G401 (cell line): ENCODE measurements at regions of chr2 and their contacts with region 1.

Region 1: DNA sequence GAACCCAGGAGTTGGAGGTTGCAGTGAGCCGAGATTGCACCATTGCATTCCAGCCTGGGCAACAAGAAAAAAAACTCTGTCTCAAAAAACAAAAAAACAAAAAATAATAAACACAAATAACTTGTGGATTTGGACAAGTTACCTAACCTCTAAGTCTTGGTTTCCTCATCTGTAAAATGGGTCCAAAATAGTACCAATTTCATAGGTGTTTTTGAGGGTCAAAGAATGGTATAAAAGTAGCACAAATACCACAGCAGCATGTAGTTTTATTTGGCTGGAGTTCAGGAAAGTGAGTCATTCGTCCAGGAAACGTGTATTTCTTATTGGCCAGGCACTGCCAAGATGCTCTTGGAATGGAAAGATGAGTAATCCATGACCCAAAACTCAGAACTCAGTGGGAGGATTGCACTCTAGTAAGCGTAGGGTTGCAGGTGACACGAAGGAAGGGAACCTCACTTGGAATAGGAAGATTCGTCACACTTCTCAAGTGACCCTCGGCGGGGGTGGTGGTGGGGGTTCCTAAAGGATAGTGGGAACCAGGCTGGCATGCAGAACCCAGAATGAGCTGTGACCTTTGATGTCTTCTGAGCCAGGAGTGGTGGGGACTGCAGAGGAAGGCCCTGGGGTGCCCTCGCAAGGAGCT is 24.4 kb downstream of the GRHL1 start:
- DNase-seq: no peak

Region 2: DNA sequence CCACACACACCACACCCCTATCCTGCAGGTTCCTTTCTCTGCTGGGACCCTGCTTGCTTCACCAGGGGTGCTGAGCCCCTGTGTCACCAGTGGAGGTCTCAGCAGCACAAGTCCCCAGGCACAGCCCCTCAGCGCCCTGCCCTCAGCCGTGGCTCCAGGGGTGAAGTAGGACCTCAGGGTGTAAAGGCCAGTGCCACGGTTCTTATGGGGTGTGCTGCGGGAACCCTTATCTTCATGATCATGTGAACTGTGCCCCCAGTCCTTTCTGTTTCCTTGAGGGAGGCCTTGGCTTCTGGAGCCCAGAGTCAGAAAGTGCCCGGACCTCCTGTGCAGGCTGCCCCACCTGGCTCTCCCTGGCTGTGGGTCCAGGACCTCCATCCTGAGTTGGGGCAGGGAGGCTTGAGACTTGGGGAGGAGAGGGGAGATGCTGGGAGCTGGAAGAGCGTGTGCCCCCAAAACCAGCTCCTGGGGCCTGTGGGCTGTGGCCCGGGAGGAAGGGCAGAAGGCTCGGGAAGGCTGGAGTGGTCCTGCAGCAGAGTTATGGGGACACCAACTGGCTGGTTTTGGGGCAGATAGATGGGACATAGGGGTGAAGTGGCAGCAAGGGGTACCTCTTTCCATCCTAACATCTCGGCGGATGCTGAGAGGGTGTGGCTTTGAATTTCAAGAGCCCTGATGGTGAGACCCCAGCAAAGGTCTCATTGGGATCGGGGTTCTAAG is 47.2 kb after region 1 on chr2:
- in situ Hi-C with region 1: no loop called
- DNase-seq: no peak

Region 3: DNA sequence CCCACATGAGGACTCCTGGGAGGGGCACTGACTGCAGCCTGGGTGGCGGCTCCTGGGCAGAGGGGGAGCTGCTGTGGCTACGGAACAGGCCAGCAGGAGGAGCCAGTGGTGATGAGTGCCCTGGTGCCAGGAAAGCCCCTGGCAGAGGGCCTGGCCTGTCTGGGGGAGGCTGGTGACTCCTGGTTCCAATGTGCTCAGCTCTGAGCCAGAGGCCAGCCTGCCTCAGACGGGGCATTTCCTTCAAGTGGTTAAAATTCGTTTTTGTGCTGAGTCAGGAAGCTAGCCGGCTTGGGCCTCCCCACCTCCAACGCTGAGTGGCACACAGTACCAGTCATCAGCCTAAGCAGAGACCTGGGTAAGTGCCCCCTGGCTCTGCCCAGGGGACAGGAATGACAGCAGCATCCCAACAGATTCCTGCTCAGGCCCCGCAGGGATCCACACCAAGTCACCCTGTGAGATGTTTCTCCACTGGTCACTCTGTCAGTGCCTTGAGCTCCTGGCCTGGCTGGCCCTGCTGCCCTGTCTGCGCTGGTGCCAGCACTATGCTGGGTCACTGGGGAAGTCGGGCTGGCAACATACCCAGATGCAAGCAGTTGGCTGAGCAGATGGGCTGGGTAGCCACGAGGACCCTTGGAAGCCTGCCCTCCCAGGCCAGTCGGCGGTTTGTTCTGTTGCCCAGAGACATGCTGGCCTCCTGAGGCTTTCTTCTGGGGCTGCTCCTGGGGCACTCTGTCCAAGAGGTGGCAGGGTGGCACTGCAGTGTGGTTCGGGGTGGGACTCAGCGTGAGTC is 60.4 kb after region 1 on chr2:
- in situ Hi-C with region 1: loop called (anchors 10 kb)
- DNase-seq: peak; percentile 95